Left colon (tissue), 2 donors: ENCODE measurements at regions of chr1 and their contacts with region 1.

Region 1: GRCh38 chr1:159936273-159936904 is 9.0 kb downstream of the IGSF9 start:
- DNase-seq: peak; percentile 64 to 89
- ATAC-seq: peak; percentile 79

Region 2: GRCh38 chr1:159780583-159781582 is 155.5 kb before region 1 on chr1 and contains the start of gene DUSP23:
- intact Hi-C with region 1: no loop called
- DNase-seq: peak; percentile 97
- ATAC-seq: peak; percentile 96
- total RNA-seq, gene DUSP23: 48.1 to 56.9 TPM

Region 3: GRCh38 chr1:160006312-160006940 is 70.0 kb after region 1 on chr1:
- intact Hi-C with region 1: loop called (anchors 2 to 5 kb)
- DNase-seq: peak; percentile 62 to 87
- ATAC-seq: peak; percentile 86